Activated naive CD4-positive, alpha-beta T cell treated with anti-CD3 and anti-CD28 coated beads for 36 hours (primary cell): ENCODE measurements at regions of chr9 and their contacts with region 1.

Region 1: DNA sequence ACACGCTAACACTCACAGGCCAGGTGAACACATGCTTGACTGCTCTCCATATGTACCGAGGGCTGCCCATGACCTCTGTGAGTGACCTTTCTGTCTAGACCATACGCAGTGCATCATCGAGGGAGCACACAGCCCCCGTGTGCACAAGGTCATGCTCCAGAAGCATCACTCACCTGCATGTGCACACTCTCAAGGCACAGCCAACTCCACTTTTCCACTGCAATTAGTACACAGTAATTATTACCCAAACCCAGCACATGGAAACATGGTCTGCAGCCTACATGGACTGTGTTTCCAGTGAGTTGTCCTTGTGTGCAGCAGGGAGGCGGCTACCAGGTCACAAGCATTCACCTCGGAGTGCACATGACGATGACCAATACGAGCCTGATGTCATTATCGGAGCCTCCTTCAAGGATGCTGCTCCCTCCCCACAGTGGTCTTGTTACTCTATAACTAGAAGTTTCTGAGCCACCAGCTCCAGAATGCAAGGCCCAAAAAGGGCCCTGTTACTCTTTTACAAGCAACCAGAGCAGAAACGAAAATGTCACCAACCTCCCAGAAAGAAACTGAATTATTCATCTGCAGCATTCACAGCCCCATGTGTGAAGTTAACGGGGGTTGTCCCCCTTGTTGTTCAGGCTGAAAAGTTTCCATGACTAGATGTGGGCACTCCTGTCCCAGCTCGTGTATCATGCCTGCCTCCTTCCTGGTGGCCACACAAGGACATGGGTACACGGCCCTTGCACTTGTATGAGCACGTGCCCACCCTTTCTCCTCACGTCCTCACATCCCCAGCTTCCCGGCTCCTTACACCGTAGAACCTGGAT is 31.2 kb downstream of the SEMA4D start:
- DNase-seq: peak; percentile 86
- H3K4me3 Mint-ChIP-seq: peak overlapping the region; percentile 38
- H3K27ac Mint-ChIP-seq: peak overlapping the region; percentile 97
- H3K4me1 Mint-ChIP-seq: peaks cover 96% of the 10 kb centered on the region
- H3K27me3 Mint-ChIP-seq: no peaks in the 10 kb centered on the region

Region 2: GRCh38 chr9:89310475-89311346 is 156.0 kb before region 1 on chr9 and contains the start of gene CKS2:
- CTCF ChIA-PET with region 1: no interaction called
- intact Hi-C with region 1: loop called (anchors 2 kb)
- DNase-seq: peak; percentile 100
- H3K4me3 Mint-ChIP-seq: peak within 1 kb of the TSS; percentile 96
- H3K27ac Mint-ChIP-seq: peak within 1 kb of the TSS; percentile 98
- H3K4me1 Mint-ChIP-seq: peaks cover 49% of the 10 kb centered on the region
- H3K27me3 Mint-ChIP-seq: no peaks in the 10 kb centered on the region
- total RNA-seq, gene CKS2: 278 to 292 TPM

Region 3: GRCh38 chr9:89388084-89388867 is 78.4 kb before region 1 on chr9:
- CTCF ChIA-PET with region 1: no interaction called
- intact Hi-C with region 1: no loop called
- DNase-seq: no peak
- H3K4me3 Mint-ChIP-seq: no peak overlapping the region
- H3K27ac Mint-ChIP-seq: no peak overlapping the region
- H3K4me1 Mint-ChIP-seq: peaks cover 9% of the 10 kb centered on the region
- H3K27me3 Mint-ChIP-seq: no peaks in the 10 kb centered on the region

Region 4: GRCh38 chr9:89418882-89419640 is 47.6 kb before region 1 on chr9:
- CTCF ChIA-PET with region 1: interaction called, 4 read pairs
- intact Hi-C with region 1: loop called (anchors 1 kb)
- DNase-seq: peak; percentile 82
- H3K4me3 Mint-ChIP-seq: peak overlapping the region; percentile 53
- H3K27ac Mint-ChIP-seq: peak overlapping the region; percentile 98
- H3K4me1 Mint-ChIP-seq: peaks cover 89% of the 10 kb centered on the region
- H3K27me3 Mint-ChIP-seq: no peaks in the 10 kb centered on the region

Region 5: DNA sequence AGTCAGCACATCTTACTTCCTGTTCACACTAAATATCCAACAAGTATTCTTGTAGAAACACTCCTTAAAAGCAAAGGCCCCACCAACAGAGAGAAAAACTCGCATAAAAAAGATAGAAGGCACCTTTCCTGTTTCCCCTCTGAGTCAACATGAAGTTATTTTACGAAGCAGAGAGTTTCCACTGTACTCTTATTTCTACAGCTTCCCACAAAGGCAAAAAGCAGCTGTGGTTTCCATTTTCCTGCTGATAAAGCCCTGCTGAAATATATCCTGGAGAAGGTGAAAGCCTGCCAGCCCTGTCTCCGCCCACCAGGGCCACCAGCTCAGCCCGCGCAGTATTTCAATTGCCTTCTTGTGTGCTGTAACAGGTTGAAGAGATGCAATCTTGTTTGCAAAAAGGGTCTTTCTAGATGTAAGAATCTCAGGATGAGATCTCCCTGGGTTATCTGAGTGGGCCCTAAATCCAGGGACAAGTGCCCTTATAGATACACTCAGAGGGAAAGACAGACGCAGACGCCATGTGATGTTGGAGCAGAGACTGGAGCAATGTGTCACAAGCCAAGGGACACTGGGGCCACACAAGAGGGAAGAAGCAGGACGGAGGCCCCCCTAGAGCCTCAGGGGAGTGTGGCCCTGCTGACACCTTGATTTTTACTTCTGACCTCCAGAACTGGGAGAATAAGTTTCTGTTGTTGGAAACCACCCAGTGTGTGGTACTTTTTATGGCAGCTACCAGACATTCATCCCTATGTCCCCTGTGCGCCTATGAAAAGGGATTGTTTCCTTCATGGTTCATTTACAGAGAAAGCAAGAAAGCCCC is 11.4 kb after region 1 on chr9:
- CTCF ChIA-PET with region 1: interaction called, 4 read pairs
- intact Hi-C with region 1: loop called (anchors 1 kb)
- DNase-seq: peak; percentile 73
- H3K4me3 Mint-ChIP-seq: peak overlapping the region; percentile 78
- H3K27ac Mint-ChIP-seq: peak overlapping the region; percentile 97
- H3K4me1 Mint-ChIP-seq: peaks cover 89% of the 10 kb centered on the region
- H3K27me3 Mint-ChIP-seq: no peaks in the 10 kb centered on the region

Region 6: DNA sequence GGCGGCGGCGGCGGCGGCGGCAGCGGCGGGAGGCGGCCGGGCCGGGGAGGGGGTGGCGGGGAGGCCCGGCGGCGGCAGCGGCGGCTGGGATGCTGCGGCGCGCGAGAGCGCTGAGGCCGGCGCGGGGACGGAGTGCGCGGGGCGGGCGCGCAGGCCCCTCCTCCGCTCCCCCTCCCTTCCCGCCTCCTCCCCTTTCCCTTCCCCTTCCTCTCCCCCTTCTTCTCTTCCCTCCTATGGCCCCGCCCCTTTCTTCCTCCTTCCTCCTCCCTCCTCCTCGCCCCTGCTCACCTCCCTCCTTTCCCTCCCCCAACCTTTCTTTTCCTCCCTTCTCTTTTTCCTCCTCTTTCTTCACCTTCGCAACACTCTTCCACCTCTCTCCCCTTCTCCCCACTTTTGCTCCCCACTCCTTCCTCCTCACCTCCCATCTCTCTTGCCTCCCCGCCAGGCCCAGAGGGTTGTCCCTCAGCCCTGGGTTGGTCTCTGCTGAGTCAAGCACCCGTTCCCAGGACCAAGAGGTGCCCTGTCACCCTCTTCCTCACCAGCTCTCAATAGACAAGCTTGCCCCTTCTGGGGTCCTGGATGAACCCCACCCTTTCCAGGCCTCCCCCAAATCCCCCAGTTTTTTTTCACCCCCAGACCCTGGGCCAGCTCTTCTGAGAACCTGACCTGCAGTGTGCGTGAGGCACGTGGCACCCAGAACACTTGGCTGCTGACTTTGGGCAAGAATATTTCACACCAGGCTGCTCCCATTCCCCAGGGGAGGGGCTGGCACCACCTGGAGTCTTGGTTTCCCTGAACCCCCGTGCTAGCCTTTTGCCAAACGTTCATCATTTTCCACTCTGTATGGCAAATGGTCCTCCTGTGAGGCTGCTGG is 31.6 kb after region 1 on chr9 and contains the start of gene SEMA4D:
- CTCF ChIA-PET with region 1: interaction called, 3 read pairs
- intact Hi-C with region 1: loop called (anchors 1 kb)
- DNase-seq: peak; percentile 84
- H3K4me3 Mint-ChIP-seq: peak within 1 kb of the TSS; percentile 89
- H3K27ac Mint-ChIP-seq: peak within 1 kb of the TSS; percentile 93
- H3K4me1 Mint-ChIP-seq: peaks cover 73% of the 10 kb centered on the region
- H3K27me3 Mint-ChIP-seq: no peaks in the 10 kb centered on the region
- total RNA-seq, gene SEMA4D: 156 to 160 TPM

Region 7: DNA sequence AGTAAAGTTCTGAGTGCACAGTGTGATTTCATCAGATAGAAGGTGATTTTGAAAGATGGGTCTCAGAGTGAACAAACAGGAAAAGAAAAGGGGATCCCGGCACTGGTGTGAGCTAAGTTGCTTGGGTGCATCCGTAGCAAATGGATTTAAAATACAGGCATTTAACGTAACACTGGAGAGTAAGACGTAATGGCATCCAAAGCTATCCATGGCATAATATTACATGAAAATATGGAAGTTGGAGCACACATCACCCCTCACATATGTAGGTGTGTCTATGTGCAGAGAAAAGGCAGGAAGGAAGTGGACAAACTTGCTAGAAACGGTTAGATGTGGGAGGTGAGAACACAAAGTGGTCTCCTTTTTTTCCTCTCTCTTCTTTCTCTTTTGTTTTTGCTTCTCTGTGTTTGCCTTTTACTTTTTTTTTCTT is 69.5 kb after region 1 on chr9:
- CTCF ChIA-PET with region 1: no interaction called
- intact Hi-C with region 1: loop called (anchors 1 kb)
- DNase-seq: peak; percentile 55
- H3K4me3 Mint-ChIP-seq: peak overlapping the region; percentile 44
- H3K27ac Mint-ChIP-seq: peak overlapping the region; percentile 86
- H3K4me1 Mint-ChIP-seq: peaks cover 88% of the 10 kb centered on the region
- H3K27me3 Mint-ChIP-seq: no peaks in the 10 kb centered on the region

Region 8: DNA sequence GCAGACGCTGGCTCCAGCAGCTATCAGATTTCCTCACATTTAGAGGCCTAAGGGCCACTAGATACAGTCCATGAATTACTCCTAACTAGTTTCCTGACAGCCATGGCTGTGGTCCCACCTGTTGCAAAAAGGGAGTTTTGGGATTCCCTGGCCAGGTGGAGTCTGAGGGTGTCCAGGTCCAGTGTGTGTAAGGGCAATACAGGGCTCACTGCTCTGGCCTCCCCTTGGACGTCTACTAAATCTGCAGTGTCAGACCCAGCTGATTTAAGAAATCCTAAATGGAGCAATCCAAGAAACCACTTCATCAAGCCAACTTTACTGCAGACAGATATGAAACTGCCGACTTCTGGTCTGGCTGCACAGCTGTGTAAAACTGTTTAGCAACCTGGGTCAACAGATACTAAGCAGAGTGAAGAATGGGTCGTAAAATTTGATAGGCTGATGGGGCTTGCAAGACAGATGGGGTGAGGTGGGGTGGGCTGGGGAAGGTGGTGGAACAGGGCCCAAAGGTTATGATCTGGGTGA is 254.6 kb after region 1 on chr9:
- CTCF ChIA-PET with region 1: no interaction called
- intact Hi-C with region 1: no loop called
- DNase-seq: no peak
- H3K4me3 Mint-ChIP-seq: no peak overlapping the region
- H3K27ac Mint-ChIP-seq: no peak overlapping the region
- H3K4me1 Mint-ChIP-seq: no peaks in the 10 kb centered on the region
- H3K27me3 Mint-ChIP-seq: no peaks in the 10 kb centered on the region

Region 9: DNA sequence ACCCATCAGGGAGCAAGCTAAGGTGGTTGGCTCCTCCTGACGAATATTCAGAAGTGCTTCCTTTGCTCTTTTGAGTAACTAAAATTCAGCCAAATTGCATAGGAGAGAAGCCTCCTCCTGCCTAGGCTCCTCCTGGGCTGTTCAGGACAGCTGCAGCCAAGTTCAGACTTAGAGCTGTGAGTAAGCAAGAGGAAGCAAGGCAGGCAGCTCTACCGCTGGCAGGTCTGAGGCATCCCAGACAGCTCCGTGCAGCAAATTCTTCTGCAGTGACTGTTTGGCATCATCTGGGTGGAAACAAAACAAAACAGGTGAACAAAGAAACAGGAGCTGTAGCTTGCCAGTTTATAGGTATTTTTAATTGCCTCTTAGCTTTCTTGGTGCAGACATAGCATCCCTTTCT is 559.2 kb after region 1 on chr9:
- CTCF ChIA-PET with region 1: no interaction called
- intact Hi-C with region 1: no loop called
- DNase-seq: no peak
- H3K4me3 Mint-ChIP-seq: no peak overlapping the region
- H3K27ac Mint-ChIP-seq: no peak overlapping the region
- H3K4me1 Mint-ChIP-seq: no peaks in the 10 kb centered on the region
- H3K27me3 Mint-ChIP-seq: no peaks in the 10 kb centered on the region